ENCODE measurements at regions of chr12 and their contacts with region 1.

Region 1: DNA sequence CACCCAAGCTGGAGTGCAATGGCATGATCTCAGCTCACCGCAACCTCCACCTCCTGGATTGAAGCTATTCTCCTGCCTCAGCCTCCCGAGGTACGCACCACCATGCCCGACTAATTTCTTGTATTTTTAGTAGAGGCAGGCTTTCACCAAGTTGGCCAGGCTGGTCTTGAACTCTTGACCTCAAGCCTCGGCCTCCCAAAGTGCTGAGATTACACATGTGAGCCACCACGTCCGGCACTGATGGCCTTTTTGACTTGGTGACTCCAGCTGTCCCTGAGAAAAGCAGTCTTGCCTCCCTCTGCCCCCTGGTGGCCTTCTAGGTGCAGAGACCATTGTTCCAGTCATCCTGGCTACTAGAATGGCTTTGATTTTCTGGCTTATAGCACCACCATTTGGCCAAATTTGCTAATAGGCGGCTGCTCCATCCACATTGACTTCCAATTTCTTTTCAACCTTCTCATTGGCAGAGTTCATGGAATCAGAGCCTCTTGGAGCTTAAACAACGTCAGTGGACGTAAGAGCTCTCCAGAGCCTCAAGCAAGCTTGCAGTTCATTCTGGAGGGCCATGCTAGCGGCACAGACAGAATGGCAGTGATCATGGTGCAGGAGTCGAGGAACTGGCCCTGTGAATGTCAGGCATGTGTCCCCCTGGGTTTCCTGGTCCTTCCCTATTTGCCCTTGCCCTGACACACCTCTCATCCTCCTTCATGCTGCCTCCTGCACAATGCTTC is 25.4 kb upstream of the EIF4B start:
- DNase-seq: peak; percentile 92
- H3K4me3 Mint-ChIP-seq: no peak overlapping the region
- H3K27ac Mint-ChIP-seq: no peak overlapping the region
- H3K4me1 Mint-ChIP-seq: no peaks in the 10 kb centered on the region
- H3K27me3 Mint-ChIP-seq: peaks cover 11% of the 10 kb centered on the region

Region 2: GRCh38 chr12:52156736-52157565 is 823.9 kb before region 1 on chr12:
- CTCF ChIA-PET with region 1: no interaction called
- intact Hi-C with region 1: no loop called
- DNase-seq: peak; percentile 83
- H3K4me3 Mint-ChIP-seq: no peak overlapping the region
- H3K27ac Mint-ChIP-seq: no peak overlapping the region
- H3K4me1 Mint-ChIP-seq: peaks cover 26% of the 10 kb centered on the region
- H3K27me3 Mint-ChIP-seq: no peaks in the 10 kb centered on the region

Region 3: GRCh38 chr12:52582971-52583456 is 397.8 kb before region 1 on chr12:
- CTCF ChIA-PET with region 1: interaction called, 6 read pairs
- intact Hi-C with region 1: loop called (anchors 10 kb)
- DNase-seq: peak; percentile 84
- H3K4me3 Mint-ChIP-seq: no peak overlapping the region
- H3K27ac Mint-ChIP-seq: no peak overlapping the region
- H3K4me1 Mint-ChIP-seq: peaks cover 49% of the 10 kb centered on the region
- H3K27me3 Mint-ChIP-seq: no peaks in the 10 kb centered on the region

Region 4: GRCh38 chr12:52910248-52910883 is 70.5 kb before region 1 on chr12:
- CTCF ChIA-PET with region 1: interaction called, 10 read pairs
- intact Hi-C with region 1: no loop called
- DNase-seq: no peak
- H3K4me3 Mint-ChIP-seq: no peak overlapping the region
- H3K27ac Mint-ChIP-seq: no peak overlapping the region
- H3K4me1 Mint-ChIP-seq: peaks cover 3% of the 10 kb centered on the region
- H3K27me3 Mint-ChIP-seq: no peaks in the 10 kb centered on the region

Region 5: GRCh38 chr12:52969828-52970569 is 10.9 kb before region 1 on chr12:
- CTCF ChIA-PET with region 1: interaction called, 15 read pairs
- intact Hi-C with region 1: no loop called
- DNase-seq: no peak
- H3K4me3 Mint-ChIP-seq: no peak overlapping the region
- H3K27ac Mint-ChIP-seq: no peak overlapping the region
- H3K4me1 Mint-ChIP-seq: no peaks in the 10 kb centered on the region
- H3K27me3 Mint-ChIP-seq: peaks cover 4% of the 10 kb centered on the region

Measured in activated naive CD4-positive, alpha-beta T cell treated with anti-CD3 and anti-CD28 coated beads for 36 hours (primary cell).